ENCODE measurements at regions of chr17 and their contacts with region 1.

Region 1: GRCh38 chr17:73255671-73256181 is 6.0 kb downstream of the CPSF4L start:
- DNase-seq: no peak
- ATAC-seq: peak; percentile 81
- H3K4me3 ChIP-seq: no peak overlapping the region
- H3K27ac ChIP-seq: no peak overlapping the region
- H3K4me1 ChIP-seq: no peaks in the 10 kb centered on the region
- H3K27me3 ChIP-seq: no peaks in the 10 kb centered on the region
- CTCF ChIP-seq: peak; percentile 99

Region 2: GRCh38 chr17:73369111-73369521 is 113.4 kb after region 1 on chr17:
- intact Hi-C with region 1: loop called (anchors 2 kb)
- DNase-seq: no peak
- ATAC-seq: no peak
- H3K4me3 ChIP-seq: no peak overlapping the region
- H3K27ac ChIP-seq: no peak overlapping the region
- H3K4me1 ChIP-seq: no peaks in the 10 kb centered on the region
- H3K27me3 ChIP-seq: no peaks in the 10 kb centered on the region
- CTCF ChIP-seq: no peak